Sigmoid colon (tissue), 7 donors: ENCODE measurements at regions of chr11 and their contacts with region 1.

Region 1: DNA sequence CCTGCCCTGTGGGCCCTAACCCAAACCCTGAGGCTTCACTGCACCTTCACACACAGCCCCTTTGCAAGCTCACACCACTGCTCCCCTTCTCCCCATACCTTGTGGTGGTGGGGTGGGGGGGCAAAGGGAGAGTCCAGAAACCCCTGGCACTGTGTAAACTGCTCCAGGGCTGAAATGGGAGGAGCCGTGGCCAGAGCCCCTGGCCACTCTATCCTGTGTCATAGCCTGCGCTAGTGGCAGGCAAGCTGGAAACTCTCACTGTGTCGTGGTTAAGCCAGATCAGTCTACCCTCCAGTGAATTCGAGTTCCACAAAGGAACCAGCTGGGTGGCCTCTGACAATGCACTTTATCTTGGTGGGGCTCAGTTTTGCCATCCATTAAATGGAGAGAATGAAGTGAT is 8.4 kb upstream of the SYT13 start:
- DNase-seq: no peak
- H3K4me3 ChIP-seq: no peak overlapping the region
- H3K27ac ChIP-seq: no peak overlapping the region
- H3K4me1 ChIP-seq: no peaks in the 10 kb centered on the region
- H3K27me3 ChIP-seq: peaks cover 0 to 7% (median 0%) of the 10 kb centered on the region in 3 donors
- CTCF ChIP-seq: no peak
- EP300 ChIP-seq: no peak
- POLR2A ChIP-seq: no peak

Region 2: GRCh38 chr11:44865866-44866272 is 428.6 kb before region 1 on chr11:
- intact Hi-C with region 1: no loop called
- DNase-seq: peak; percentile 85
- H3K4me3 ChIP-seq: no peak overlapping the region
- H3K27ac ChIP-seq: peak overlapping the region; percentile 91 to 97 (median 95)
- H3K4me1 ChIP-seq: peaks cover 0 to 83% (median 61%) of the 10 kb centered on the region in 4 donors
- H3K27me3 ChIP-seq: no peaks in the 10 kb centered on the region
- CTCF ChIP-seq: no peak
- EP300 ChIP-seq: no peak
- POLR2A ChIP-seq: no peak

Region 3: GRCh38 chr11:44931466-44931865 is 363.0 kb before region 1 on chr11:
- intact Hi-C with region 1: loop called (anchors 5 kb)
- DNase-seq: no peak
- H3K4me3 ChIP-seq: no peak overlapping the region
- H3K27ac ChIP-seq: no peak overlapping the region
- H3K4me1 ChIP-seq: peaks cover 0 to 3% (median 0%) of the 10 kb centered on the region in 4 donors
- H3K27me3 ChIP-seq: no peaks in the 10 kb centered on the region
- CTCF ChIP-seq: no peak
- EP300 ChIP-seq: no peak
- POLR2A ChIP-seq: no peak

Region 4: DNA sequence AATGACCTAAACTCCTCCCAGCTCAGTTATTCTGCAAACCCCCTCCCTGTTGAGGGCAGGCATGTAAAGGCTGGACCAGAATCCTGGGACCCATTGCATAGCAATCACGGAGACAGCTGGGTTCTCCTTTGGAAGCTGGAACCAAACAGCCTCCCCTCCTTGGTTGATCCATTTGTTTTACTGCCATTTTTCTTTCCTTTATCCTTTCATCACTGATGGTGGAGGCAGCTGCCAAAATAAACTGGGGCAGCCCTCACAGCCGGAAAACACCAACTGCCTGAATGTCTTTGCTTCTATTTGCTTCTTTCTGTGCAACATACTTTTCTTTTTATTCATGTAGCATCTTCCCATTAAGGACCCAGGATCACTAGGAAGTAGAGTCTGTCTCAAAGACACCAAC is 141.6 kb after region 1 on chr11:
- intact Hi-C with region 1: no loop called
- DNase-seq: no peak
- H3K4me3 ChIP-seq: no peak overlapping the region
- H3K27ac ChIP-seq: no peak overlapping the region
- H3K4me1 ChIP-seq: no peaks in the 10 kb centered on the region
- H3K27me3 ChIP-seq: peaks cover 0 to 6% (median 0%) of the 10 kb centered on the region in 3 donors
- CTCF ChIP-seq: no peak
- EP300 ChIP-seq: no peak
- POLR2A ChIP-seq: no peak